ENCODE measurements at regions of chrX and their contacts with region 1.

Region 1: GRCh38 chrX:3271834-3272186 is 74.6 kb downstream of the MXRA5 start:
- DNase-seq: peak; percentile 74
- ATAC-seq: peak; percentile 72
- H3K4me3 ChIP-seq: no peak overlapping the region
- H3K27ac ChIP-seq: peak overlapping the region; percentile 60
- H3K4me1 ChIP-seq: peaks cover 12% of the 10 kb centered on the region
- H3K27me3 ChIP-seq: no peaks in the 10 kb centered on the region
- CTCF ChIP-seq: no peak
- POLR2A ChIP-seq: no peak
- RAD21 ChIP-seq: no peak

Region 2: DNA sequence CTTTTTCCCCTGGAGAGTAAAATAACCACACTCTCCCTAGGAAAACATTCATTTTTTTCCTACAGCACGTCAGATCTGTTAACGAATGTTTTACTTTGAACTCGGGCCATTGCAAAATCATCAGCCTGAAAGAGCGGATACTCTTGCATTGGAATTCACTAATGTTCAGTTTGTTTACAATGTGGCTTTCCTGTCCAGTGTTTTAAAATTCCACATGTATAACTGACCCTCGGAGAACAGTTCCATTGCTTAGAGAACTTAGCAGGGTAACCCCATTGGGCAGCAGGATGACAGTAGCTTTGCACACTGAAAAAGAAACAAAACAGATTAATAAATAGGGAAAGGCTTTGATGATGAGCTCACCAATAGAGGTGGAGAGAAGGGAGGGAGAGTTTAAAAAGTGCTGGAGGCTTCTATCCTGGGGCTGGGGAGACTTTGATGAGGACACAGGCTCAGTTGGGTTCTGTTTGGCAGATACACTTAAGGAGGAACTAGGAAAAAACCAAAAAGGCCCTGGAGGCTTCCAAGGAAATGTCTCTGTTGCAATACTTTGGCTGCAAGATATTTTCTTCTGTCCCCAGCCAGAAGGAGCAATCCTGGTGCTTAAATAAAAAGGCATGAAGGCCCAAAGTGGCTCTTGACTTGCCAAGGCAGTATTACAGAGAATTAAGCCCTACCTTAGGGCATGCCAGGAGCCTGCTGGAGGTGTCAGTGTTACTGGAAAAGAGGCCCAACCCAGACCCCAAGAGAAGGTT is 87.5 kb before region 1 on chrX:
- CTCF ChIA-PET with region 1: no interaction called
- POLR2A ChIA-PET with region 1: no interaction called
- dilution Hi-C with region 1: no loop called
- in situ Hi-C with region 1: no loop called
- intact Hi-C with region 1: loop called (anchors 5 kb)
- DNase-seq: peak; percentile 94
- ATAC-seq: peak; percentile 97
- H3K4me3 ChIP-seq: no peak overlapping the region
- H3K27ac ChIP-seq: peak overlapping the region; percentile 99
- H3K4me1 ChIP-seq: peaks cover 12% of the 10 kb centered on the region
- H3K27me3 ChIP-seq: no peaks in the 10 kb centered on the region
- CTCF ChIP-seq: no peak
- POLR2A ChIP-seq: no peak
- RAD21 ChIP-seq: no peak

Measured in IMR-90 (cell line).